PC-3 (cell line): ENCODE measurements at regions of chr1 and their contacts with region 1.

Region 1: DNA sequence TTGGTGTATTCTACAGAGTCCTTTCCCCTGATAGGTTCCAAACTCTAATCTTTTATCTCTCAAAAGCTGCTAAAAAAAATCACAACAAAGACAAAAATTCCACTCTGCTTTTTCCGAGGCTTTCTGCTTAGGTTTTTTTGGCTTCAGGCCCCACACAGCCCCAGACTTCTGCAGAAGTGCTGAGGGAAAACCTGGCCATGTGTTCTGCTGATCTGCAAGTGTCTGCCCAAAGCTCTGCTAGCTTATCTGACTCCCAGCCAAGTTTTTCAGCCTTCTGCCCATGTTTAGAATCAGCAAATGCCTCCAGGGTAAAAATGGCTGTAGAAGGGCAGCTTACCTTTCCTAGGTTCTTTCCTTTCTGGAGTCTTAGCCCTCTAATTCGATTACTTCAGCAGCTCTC is 28.4 kb downstream of the DISP3 start:
- DNase-seq: no peak
- ATAC-seq: no peak
- H3K4me3 ChIP-seq: no peak overlapping the region
- H3K27ac ChIP-seq: no peak overlapping the region
- H3K4me1 ChIP-seq: no peaks in the 10 kb centered on the region
- H3K27me3 ChIP-seq: no peaks in the 10 kb centered on the region
- CTCF ChIP-seq: no peak

Region 2: DNA sequence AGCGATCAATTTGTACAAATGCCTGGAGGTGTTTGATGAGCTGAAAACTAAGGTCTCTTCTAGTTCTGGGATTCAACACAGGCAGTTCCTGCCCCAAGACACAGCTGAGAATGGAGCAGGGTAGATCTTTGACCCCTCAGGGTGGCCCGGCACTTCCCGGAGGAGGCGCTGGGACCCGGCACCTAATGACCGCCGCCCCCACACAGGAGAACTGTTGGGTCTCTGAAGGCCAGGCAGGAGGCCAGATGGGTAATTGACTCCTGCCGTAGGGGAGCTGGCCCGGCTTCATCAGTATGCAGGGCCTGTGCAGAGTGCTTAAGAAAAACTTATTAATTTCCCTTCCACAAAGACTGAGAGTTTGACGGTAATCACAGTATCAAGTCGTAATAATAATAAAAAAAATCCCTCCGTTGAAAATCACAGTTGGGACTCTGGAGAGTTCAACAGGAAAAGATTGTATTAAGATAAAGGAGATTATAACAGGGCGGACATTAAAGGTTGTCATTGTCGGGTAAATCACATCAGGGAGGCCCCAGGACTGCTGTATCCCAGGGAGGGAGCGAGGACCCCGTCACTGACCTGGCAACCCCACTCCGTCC is 182.6 kb before region 1 on chr1:
- CTCF ChIA-PET with region 1: no interaction called
- POLR2A ChIA-PET with region 1: interaction called, 10 read pairs
- intact Hi-C with region 1: no loop called
- DNase-seq: no peak
- ATAC-seq: no peak
- H3K4me3 ChIP-seq: no peak overlapping the region
- H3K27ac ChIP-seq: no peak overlapping the region
- H3K4me1 ChIP-seq: 0 out of 2 replicates have a peak, but pooled peaks cover 5% of the 10 kb centered on the region
- H3K27me3 ChIP-seq: no peaks in the 10 kb centered on the region
- CTCF ChIP-seq: no peak

Region 3: GRCh38 chr1:11525516-11525915 is 18.2 kb after region 1 on chr1:
- CTCF ChIA-PET with region 1: no interaction called
- POLR2A ChIA-PET with region 1: interaction called, 19 read pairs
- intact Hi-C with region 1: no loop called
- DNase-seq: no peak
- ATAC-seq: no peak
- H3K4me3 ChIP-seq: no peak overlapping the region
- H3K27ac ChIP-seq: no peak overlapping the region
- H3K4me1 ChIP-seq: no peaks in the 10 kb centered on the region
- H3K27me3 ChIP-seq: no peaks in the 10 kb centered on the region
- CTCF ChIP-seq: no peak